GM13977 (cell line): ENCODE measurements at regions of chr7 and their contacts with region 1.

Region 1: GRCh38 chr7:101058355-101058754 is 26.9 kb upstream of the TRIM56 start:
- DNase-seq: peak; percentile 47
- CTCF ChIP-seq: no peak

Region 2: GRCh38 chr7:100889761-100890634 is 168.4 kb before region 1 on chr7:
- in situ Hi-C with region 1: loop called (anchors 5 kb)
- DNase-seq: peak; percentile 100
- CTCF ChIP-seq: no peak

Region 3: GRCh38 chr7:100965723-100966541 is 92.4 kb before region 1 on chr7:
- in situ Hi-C with region 1: loop called (anchors 10 kb)
- DNase-seq: peak; percentile 96
- CTCF ChIP-seq: peak; percentile 100

Region 4: DNA sequence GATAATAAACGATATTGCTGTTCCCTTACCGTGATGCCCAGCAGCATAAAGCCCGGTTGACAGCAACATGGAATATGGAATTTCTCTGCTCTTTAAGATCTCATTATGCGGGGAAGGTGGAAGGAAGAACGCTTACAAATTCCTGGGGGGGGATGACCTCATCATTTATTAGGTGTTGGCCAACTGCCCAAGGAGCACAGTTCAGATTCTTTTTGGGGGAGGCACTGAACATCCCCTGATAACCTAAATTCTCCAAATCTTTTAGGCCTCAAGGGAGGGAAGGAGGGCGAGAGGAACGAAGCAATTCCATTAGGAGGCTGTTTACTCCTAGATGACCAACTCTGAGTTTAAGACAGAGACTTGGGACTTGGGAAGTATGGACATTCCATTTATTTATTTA is 299.1 kb after region 1 on chr7:
- in situ Hi-C with region 1: no loop called
- DNase-seq: no peak
- CTCF ChIP-seq: no peak